ENCODE measurements at regions of chr1 and their contacts with region 1.

Region 1: DNA sequence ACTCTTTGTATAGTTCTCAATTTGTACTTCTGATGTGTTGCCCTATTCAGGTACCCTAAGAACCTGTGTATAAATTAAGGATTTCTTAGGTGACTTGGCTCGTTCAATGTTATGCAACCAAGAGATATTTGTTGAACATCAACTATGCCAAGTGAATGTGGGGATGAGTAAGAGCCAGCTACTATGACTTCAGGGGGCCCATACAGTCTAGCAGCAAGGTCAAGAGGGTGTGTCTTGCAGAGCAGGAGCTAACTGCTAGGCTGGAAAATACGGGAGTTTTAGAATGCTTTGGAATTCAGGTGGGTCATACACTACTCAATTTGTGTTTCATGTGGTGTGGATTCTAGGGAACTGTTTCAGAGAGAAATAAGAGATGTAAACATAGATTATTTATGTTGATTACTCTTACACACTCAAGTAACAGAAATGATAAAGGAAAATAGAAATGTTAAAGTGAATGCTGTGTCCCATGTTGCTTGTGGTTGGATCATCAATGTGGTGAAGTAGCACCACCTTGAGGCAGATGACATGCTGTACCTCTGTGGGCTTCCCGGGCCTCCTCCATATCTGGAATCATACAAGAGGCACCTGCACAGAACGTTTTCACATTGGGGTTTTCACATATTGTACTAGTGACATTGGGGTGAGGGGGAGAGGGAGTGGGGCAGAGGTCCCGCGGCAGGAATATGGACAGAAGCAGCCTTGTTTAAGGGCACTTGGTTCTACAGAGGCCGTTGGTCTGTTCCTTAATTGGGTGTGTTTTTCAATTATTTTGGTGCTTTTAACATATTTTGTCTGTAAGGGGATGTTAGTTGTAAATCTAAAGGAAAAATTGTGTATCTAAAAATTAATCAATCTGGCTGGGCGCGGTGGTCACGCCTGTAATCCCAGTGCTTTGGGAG is 12.4 kb downstream of the ARPC5 start:
- DNase-seq: peak; percentile 18 to 58
- ATAC-seq: peak; percentile 87 to 94 (median 92)
- H3K4me3 ChIP-seq: no peak overlapping the region
- H3K27ac ChIP-seq: peak overlapping the region in 3 of 10 donors; percentile 12 to 58 (median 18)
- H3K4me1 ChIP-seq: peaks cover 0 to 52% (median 28%) of the 10 kb centered on the region in 9 donors
- H3K27me3 ChIP-seq: no peaks in the 10 kb centered on the region
- CTCF ChIP-seq: peak; percentile 42 to 82 (median 69)

Region 2: DNA sequence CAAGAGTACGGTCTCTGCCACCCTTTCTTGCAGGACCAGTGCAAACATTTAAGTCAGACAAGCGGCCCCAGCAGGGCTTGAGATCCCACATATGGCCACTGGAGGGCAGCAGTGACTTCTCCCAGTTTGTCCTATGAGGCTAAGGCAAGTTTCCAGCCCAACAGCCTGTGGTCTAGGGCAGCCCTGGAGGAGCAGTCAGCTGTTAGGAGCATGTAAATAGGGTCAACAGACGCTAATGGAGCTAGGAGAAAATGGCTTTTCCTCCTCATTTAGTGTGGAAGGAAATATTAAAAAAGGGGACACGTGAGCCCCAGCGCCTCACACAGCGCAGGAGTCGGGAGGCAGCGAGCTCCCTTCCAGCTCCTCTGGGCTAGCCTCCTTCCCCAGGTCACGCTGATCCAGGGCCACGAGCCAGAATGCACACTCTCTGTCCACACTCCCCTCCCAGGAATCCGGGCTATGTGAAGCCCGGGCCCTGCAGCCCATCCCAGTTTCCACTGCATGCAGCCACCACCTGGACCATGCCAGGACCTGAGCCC is 341.5 kb before region 1 on chr1:
- intact Hi-C with region 1: loop called in 4 of 10 experiments (anchors 10 kb)
- DNase-seq: peak; percentile 89 to 94
- ATAC-seq: peak; percentile 85 to 93 (median 90)
- H3K4me3 ChIP-seq: peak overlapping the region in 4 of 10 donors; percentile 5 to 30 (median 14)
- H3K27ac ChIP-seq: peak overlapping the region; percentile 69 to 92 (median 84)
- H3K4me1 ChIP-seq: peaks cover 14 to 73% (median 61%) of the 10 kb centered on the region in 9 donors
- H3K27me3 ChIP-seq: no peaks in the 10 kb centered on the region
- CTCF ChIP-seq: peak; percentile 90 to 98 (median 95)

Region 3: GRCh38 chr1:183318433-183318832 is 304.7 kb before region 1 on chr1:
- intact Hi-C with region 1: loop called in 1 of 10 experiments (anchors 10 kb)
- DNase-seq: peak; percentile 73 to 86
- ATAC-seq: peak; percentile 94 to 98 (median 97)
- H3K4me3 ChIP-seq: no peak overlapping the region
- H3K27ac ChIP-seq: peak overlapping the region; percentile 47 to 89 (median 84)
- H3K4me1 ChIP-seq: peaks cover 7 to 35% (median 27%) of the 10 kb centered on the region in 9 donors
- H3K27me3 ChIP-seq: no peaks in the 10 kb centered on the region
- CTCF ChIP-seq: peak; percentile 48 to 90 (median 77)

Region 4: GRCh38 chr1:183471743-183472487 is 151.2 kb before region 1 on chr1:
- intact Hi-C with region 1: loop called in 5 of 10 experiments (anchors 5 to 10 kb)
- DNase-seq: peak; percentile 98 to 99
- ATAC-seq: peak; percentile 84 to 93 (median 88)
- H3K4me3 ChIP-seq: peak overlapping the region; percentile 79 to 99 (median 96)
- H3K27ac ChIP-seq: peak overlapping the region; percentile 92 to 99 (median 96)
- H3K4me1 ChIP-seq: peaks cover 0 to 49% (median 41%) of the 10 kb centered on the region in 9 donors
- H3K27me3 ChIP-seq: no peaks in the 10 kb centered on the region
- CTCF ChIP-seq: peak in 5 of 9 donors; percentile 14 to 43 (median 25)

Region 5: DNA sequence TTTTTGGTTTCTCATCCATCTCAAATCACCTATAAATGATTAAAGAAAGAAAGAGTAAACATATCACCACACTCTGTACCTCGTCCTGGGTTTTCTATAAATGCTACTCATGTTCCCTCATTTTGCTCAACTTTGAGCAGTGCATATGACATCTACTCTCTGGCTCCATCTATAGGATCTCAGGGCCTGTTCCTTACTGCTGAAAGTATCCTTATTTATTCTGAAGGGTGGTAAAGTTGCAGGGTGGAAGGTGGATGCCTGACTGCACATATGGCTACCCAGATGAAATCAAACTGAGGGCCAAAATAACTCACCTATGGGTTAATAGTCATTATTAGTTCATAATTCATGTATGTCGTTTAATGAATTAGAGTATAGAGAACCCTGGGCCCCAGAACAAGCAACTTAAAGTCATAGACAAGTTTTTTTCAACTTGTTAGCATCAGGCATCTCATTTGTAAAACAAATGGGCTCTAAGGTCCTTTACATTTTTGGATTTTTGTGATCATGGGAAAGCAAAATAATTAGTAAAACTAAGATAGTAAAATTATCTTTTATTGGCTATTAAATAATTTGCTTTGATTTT is 79.4 kb before region 1 on chr1:
- intact Hi-C with region 1: loop called in 4 of 10 experiments (anchors 5 to 10 kb)
- DNase-seq: peak in 1 of 2 donors; percentile 20
- ATAC-seq: peak; percentile 72 to 83 (median 78)
- H3K4me3 ChIP-seq: no peak overlapping the region
- H3K27ac ChIP-seq: peak overlapping the region in 1 of 10 donors; percentile 54
- H3K4me1 ChIP-seq: peaks cover 0 to 43% (median 19%) of the 10 kb centered on the region in 9 donors
- H3K27me3 ChIP-seq: no peaks in the 10 kb centered on the region
- CTCF ChIP-seq: peak; percentile 16 to 73 (median 65)

Region 6: GRCh38 chr1:183554577-183554976 is 68.6 kb before region 1 on chr1:
- intact Hi-C with region 1: loop called in 4 of 10 experiments (anchors 10 kb)
- DNase-seq: no peak
- ATAC-seq: no peak
- H3K4me3 ChIP-seq: no peak overlapping the region
- H3K27ac ChIP-seq: peak overlapping the region in 1 of 10 donors; percentile 5
- H3K4me1 ChIP-seq: peaks cover 0 to 11% (median 0%) of the 10 kb centered on the region in 9 donors
- H3K27me3 ChIP-seq: no peaks in the 10 kb centered on the region
- CTCF ChIP-seq: no peak

Region 7: GRCh38 chr1:183777328-183777727 is 154.2 kb after region 1 on chr1:
- intact Hi-C with region 1: no loop called
- DNase-seq: no peak
- ATAC-seq: no peak
- H3K4me3 ChIP-seq: no peak overlapping the region
- H3K27ac ChIP-seq: no peak overlapping the region
- H3K4me1 ChIP-seq: peaks cover 0 to 15% (median 11%) of the 10 kb centered on the region in 9 donors
- H3K27me3 ChIP-seq: no peaks in the 10 kb centered on the region
- CTCF ChIP-seq: no peak

Region 8: GRCh38 chr1:185008838-185009237 is 1385.7 kb after region 1 on chr1:
- intact Hi-C with region 1: loop called in 1 of 10 experiments (anchors 5 kb)
- DNase-seq: no peak
- ATAC-seq: no peak
- H3K4me3 ChIP-seq: no peak overlapping the region
- H3K27ac ChIP-seq: no peak overlapping the region
- H3K4me1 ChIP-seq: no peaks in the 10 kb centered on the region
- H3K27me3 ChIP-seq: no peaks in the 10 kb centered on the region
- CTCF ChIP-seq: no peak